Activated naive CD4-positive, alpha-beta T cell treated with anti-CD3 and anti-CD28 coated beads for 36 hours (primary cell): ENCODE measurements at regions of chrX and their contacts with region 1.

Region 1: DNA sequence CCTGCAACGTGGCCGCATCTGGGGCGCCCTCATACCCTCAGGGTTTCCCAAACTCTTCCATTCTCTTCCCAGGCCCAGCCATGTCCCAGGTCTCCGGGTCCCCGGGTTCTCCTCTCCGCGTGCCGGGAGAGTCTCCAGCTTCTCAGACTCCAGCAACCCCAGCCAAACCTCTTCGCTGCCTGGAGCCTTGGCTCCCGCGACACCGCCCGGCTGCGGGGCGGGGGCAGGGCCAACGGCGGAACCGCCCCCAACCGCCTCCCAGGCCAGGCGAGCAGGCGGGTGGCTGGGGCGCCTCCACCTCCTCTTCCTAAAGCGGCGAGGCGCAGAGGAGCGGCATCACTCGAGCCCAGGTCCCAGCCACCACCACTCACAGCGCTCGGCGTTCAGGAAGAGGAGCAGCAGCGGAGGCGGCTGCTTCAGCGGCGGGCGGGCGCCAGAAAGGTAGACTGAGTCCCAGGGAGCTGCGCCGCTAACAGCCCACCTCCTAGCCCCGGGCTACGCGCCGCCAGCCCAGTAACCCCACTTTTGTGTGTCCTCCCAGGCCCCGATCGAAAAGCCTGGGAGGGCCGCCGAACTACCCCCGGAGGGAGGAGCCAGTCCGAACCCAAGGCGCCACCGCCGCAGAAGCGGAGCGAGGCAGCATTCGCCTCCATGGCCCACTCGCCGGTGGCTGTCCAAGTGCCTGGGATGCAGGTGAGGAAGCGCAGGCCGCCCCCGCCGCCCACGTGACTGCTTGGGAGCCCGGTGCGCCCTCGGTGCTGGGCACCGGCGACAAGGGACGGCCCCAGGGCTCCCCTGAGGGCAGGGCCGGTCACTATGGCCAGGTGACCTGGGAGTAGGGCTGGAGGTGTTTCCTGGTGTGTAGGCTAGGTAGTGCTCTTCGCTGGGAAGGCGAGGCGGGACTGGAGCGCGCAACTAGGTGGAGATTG is at the start of gene STK26:
- DNase-seq: peak; percentile 80
- H3K4me3 Mint-ChIP-seq: peak within 1 kb of the TSS; percentile 91
- H3K27ac Mint-ChIP-seq: peak within 1 kb of the TSS; percentile 91
- H3K4me1 Mint-ChIP-seq: peaks cover 31% of the 10 kb centered on the region
- H3K27me3 Mint-ChIP-seq: no peaks in the 10 kb centered on the region
- total RNA-seq, gene STK26: 54.0 to 55.6 TPM

Region 2: DNA sequence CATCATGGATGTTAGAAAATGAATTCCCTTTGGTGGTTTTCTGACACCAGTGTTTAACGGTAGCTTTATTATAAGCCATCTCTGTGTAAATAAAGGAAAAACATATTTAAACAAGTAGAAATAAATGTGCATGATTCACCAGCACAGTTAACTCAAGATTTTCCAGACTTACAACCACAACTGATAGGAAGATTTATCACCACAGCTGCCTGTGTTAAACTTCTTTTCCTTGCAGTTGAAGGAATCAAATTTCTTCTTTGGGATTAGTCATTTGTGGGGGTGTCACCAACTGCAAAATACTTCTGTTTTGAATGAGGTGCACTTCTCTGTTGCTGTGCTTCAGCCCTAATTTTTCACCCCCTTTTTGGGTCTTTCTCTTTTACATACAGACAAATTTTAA is 128.2 kb before region 1 on chrX:
- CTCF ChIA-PET with region 1: no interaction called
- intact Hi-C with region 1: loop called (anchors 5 kb)
- DNase-seq: no peak
- H3K4me3 Mint-ChIP-seq: no peak overlapping the region
- H3K27ac Mint-ChIP-seq: no peak overlapping the region
- H3K4me1 Mint-ChIP-seq: peaks cover 7% of the 10 kb centered on the region
- H3K27me3 Mint-ChIP-seq: no peaks in the 10 kb centered on the region

Region 3: GRCh38 chrX:131987252-131987651 is 36.0 kb before region 1 on chrX:
- CTCF ChIA-PET with region 1: interaction called, 4 read pairs
- intact Hi-C with region 1: loop called (anchors 2 kb)
- DNase-seq: peak; percentile 28
- H3K4me3 Mint-ChIP-seq: peak overlapping the region; percentile 20
- H3K27ac Mint-ChIP-seq: peak overlapping the region; percentile 94
- H3K4me1 Mint-ChIP-seq: peaks cover 48% of the 10 kb centered on the region
- H3K27me3 Mint-ChIP-seq: no peaks in the 10 kb centered on the region

Region 4: GRCh38 chrX:132041015-132041414 is 17.8 kb after region 1 on chrX:
- CTCF ChIA-PET with region 1: no interaction called
- intact Hi-C with region 1: no loop called
- DNase-seq: no peak
- H3K4me3 Mint-ChIP-seq: no peak overlapping the region
- H3K27ac Mint-ChIP-seq: no peak overlapping the region
- H3K4me1 Mint-ChIP-seq: peaks cover 55% of the 10 kb centered on the region
- H3K27me3 Mint-ChIP-seq: no peaks in the 10 kb centered on the region

Region 5: GRCh38 chrX:132071260-132071659 is 48.0 kb after region 1 on chrX:
- CTCF ChIA-PET with region 1: interaction called, 3 read pairs
- intact Hi-C with region 1: loop called (anchors 5 kb)
- DNase-seq: no peak
- H3K4me3 Mint-ChIP-seq: no peak overlapping the region
- H3K27ac Mint-ChIP-seq: no peak overlapping the region
- H3K4me1 Mint-ChIP-seq: no peaks in the 10 kb centered on the region
- H3K27me3 Mint-ChIP-seq: no peaks in the 10 kb centered on the region

Region 6: DNA sequence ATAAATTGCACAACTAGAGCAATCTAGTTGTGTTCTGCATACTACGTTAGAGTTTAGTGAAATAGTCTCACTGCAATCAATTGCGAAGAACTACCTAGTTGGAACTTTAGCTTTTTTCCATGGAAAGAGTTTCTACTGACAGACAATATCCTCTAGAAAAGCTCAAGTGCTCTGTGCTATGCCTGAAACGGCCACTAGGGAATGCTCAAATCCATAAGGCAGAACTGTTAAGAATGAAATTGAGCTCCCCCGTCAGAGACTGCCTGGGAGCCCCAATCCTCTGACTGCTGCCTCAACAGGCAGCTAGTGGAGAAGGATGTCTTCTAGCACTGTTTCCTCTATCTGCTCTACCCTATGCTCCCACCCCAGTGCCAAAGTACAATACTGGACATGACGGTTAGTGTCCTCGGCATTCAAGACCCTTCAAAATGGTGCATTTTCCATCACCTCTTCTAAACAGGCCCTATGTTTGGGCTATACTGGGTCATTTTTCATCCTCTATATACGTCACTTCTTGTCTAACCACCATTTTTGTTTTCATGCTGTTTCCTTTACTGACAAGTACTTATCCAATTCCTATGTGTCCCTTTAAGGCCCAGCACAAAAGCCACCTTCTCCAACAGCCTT is 69.3 kb after region 1 on chrX:
- CTCF ChIA-PET with region 1: interaction called, 3 read pairs
- intact Hi-C with region 1: loop called (anchors 5 kb)
- DNase-seq: peak; percentile 77
- H3K4me3 Mint-ChIP-seq: no peak overlapping the region
- H3K27ac Mint-ChIP-seq: no peak overlapping the region
- H3K4me1 Mint-ChIP-seq: no peaks in the 10 kb centered on the region
- H3K27me3 Mint-ChIP-seq: no peaks in the 10 kb centered on the region

Region 7: DNA sequence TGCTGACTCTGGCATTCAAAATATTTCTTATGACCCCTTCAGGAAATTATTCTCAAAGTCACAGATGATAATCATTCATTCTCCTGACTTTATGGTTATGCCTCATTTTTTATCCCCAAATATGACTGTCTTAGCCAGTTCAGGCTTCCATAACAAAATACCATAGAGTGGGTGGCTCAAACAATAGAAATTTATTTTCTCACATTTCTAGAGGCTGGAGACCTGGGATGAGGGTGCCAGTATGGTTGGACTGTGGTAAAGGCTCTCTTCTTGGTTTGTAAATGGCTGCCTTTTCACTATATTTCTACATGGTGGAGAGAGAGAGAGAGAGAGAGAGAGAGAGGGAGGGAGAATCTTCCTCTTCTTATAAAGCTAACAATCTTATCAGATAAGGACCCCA is 84.1 kb after region 1 on chrX:
- CTCF ChIA-PET with region 1: no interaction called
- intact Hi-C with region 1: no loop called
- DNase-seq: no peak
- H3K4me3 Mint-ChIP-seq: no peak overlapping the region
- H3K27ac Mint-ChIP-seq: no peak overlapping the region
- H3K4me1 Mint-ChIP-seq: no peaks in the 10 kb centered on the region
- H3K27me3 Mint-ChIP-seq: no peaks in the 10 kb centered on the region

Region 8: DNA sequence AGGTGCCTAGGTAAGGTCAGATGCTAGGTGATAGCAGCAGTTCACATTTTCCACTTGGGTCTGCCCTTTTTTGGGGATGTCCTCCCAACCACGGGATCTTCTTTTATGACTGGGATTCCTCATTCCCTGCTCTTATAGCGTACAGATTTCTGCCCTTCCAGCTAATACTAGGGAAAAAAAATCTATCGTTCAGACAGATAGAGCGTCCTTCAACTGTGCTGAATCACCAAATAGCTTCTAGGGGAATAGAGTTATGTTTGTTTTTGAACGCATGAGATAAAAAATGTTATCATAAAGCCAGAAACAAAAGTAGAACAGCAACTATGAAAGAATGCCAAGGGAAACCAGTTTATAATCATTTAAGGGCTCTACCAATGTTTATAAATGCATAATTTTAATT is 183.0 kb after region 1 on chrX:
- CTCF ChIA-PET with region 1: no interaction called
- intact Hi-C with region 1: no loop called
- DNase-seq: no peak
- H3K4me3 Mint-ChIP-seq: no peak overlapping the region
- H3K27ac Mint-ChIP-seq: no peak overlapping the region
- H3K4me1 Mint-ChIP-seq: peaks cover 28% of the 10 kb centered on the region
- H3K27me3 Mint-ChIP-seq: no peaks in the 10 kb centered on the region

Region 9: DNA sequence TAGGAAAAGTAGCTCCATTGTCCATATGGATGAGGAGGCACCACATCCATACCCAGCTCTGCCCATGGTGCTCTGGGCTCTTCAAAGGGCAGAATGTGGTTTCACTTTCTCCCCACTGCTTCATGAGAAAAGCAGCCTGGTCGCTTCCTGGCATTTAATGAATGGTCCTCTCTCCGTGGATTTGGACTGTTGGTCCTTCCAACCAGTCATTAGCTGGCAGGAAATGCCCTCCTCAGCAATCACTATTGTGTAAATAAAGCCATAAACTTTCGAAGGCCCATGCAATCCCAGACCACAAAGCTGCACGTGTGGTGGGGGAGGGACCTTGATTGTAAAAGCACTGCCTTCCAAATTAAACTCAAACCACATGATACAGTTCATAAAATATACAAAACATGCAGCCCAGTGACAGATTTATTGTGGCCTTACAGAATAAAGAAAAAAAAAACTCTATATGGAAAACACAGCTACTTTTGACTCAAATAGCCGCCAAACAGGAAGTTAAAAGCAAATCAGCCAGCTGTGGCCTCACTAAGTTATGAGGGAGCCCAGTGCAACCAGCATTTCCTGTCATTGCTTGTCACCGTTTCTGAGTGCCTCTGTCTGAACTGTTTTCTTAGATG is 457.5 kb after region 1 on chrX:
- CTCF ChIA-PET with region 1: no interaction called
- intact Hi-C with region 1: loop called (anchors 2 kb)
- DNase-seq: peak; percentile 61
- H3K4me3 Mint-ChIP-seq: peak overlapping the region; percentile 75
- H3K27ac Mint-ChIP-seq: peak overlapping the region; percentile 96
- H3K4me1 Mint-ChIP-seq: peaks cover 44% of the 10 kb centered on the region
- H3K27me3 Mint-ChIP-seq: no peaks in the 10 kb centered on the region

Region 10: DNA sequence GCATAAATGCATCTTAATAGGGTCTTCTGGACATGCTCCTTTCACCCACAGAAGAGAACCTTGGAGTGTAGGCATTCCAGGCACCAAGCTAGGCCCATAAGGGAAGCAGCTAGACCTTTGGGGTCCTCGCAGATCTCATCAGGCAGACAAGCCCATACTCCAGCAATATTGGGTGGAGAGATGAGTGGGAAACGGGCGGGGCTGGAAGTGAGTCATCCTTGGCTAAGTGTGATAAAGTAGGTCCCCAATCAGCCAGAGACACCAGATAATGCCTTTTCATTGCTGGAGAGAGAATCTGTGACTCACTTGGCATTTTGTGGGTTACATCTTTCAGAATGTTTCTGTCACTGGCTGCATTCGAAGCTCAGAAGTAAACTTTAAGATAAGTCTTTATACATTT is 598.9 kb after region 1 on chrX:
- CTCF ChIA-PET with region 1: no interaction called
- intact Hi-C with region 1: loop called (anchors 5 kb)
- DNase-seq: peak; percentile 77
- H3K4me3 Mint-ChIP-seq: no peak overlapping the region
- H3K27ac Mint-ChIP-seq: no peak overlapping the region
- H3K4me1 Mint-ChIP-seq: peaks cover 7% of the 10 kb centered on the region
- H3K27me3 Mint-ChIP-seq: no peaks in the 10 kb centered on the region